Activated T-helper 2 cell treated with anti-CD3 and anti-CD28 coated beads, Interferon-gamma antibody, Interleukin-2, Interleukin-4, amounts not matched to agents 10 μg/mL and 5 μg/mL and 100 μg/mL, durations not matched to agents 14 hours and 24 hours and 36 hours (primary cell): ENCODE measurements at regions of chr12 and their contacts with region 1.

Region 1: GRCh38 chr12:43835656-43836474 is at the start of gene TMEM117:
- DNase-seq: peak; percentile 49
- H3K4me3 Mint-ChIP-seq: peak within 1 kb of the TSS; percentile 79
- H3K27ac Mint-ChIP-seq: peak within 1 kb of the TSS; percentile 34
- H3K4me1 Mint-ChIP-seq: peaks cover 24% of the 10 kb centered on the region
- H3K27me3 Mint-ChIP-seq: peaks cover 41% of the 10 kb centered on the region
- total RNA-seq, gene TMEM117: 1.0 and 1.3 TPM in 2 replicates

Region 2: GRCh38 chr12:43621262-43621661 is 214.6 kb before region 1 on chr12:
- intact Hi-C with region 1: no loop called
- DNase-seq: no peak
- H3K4me3 Mint-ChIP-seq: no peak overlapping the region
- H3K27ac Mint-ChIP-seq: no peak overlapping the region
- H3K4me1 Mint-ChIP-seq: no peaks in the 10 kb centered on the region
- H3K27me3 Mint-ChIP-seq: no peaks in the 10 kb centered on the region

Region 3: GRCh38 chr12:43758728-43759563 is 76.9 kb before region 1 on chr12 and contains the starts of genes IRAK4 and PUS7L:
- intact Hi-C with region 1: loop called (anchors 2 kb)
- DNase-seq: peak; percentile 91
- H3K4me3 Mint-ChIP-seq: peak within 1 kb of the TSS; percentile 96
- H3K27ac Mint-ChIP-seq: peak within 1 kb of the TSS; percentile 97
- H3K4me1 Mint-ChIP-seq: peaks cover 52% of the 10 kb centered on the region
- H3K27me3 Mint-ChIP-seq: no peaks in the 10 kb centered on the region
- total RNA-seq, gene IRAK4: 26.5 and 28.5 TPM in 2 replicates
- total RNA-seq, gene PUS7L: 22.8 and 24.4 TPM in 2 replicates

Region 4: DNA sequence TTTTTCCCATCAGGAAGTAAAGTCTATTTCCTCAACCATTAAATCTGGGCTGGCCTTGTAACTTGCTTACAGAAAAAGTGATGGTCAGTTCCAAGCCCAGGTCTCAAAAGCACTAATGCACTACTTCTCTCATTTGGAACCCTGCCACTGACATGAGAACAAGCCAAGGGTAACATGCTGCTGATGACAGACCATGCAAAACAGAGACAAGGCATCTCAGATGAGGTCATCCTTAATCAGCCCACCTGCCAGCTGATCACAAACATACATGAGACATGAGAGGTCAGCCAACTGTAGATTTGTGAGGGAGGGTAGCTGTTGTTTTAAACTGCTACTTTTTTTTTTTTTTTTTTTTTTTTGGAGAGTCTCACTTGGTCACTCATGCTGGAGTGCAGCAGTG is 45.9 kb before region 1 on chr12:
- intact Hi-C with region 1: no loop called
- DNase-seq: no peak
- H3K4me3 Mint-ChIP-seq: no peak overlapping the region
- H3K27ac Mint-ChIP-seq: no peak overlapping the region
- H3K4me1 Mint-ChIP-seq: no peaks in the 10 kb centered on the region
- H3K27me3 Mint-ChIP-seq: no peaks in the 10 kb centered on the region

Region 5: GRCh38 chr12:43805860-43806736 is 29.8 kb before region 1 on chr12 and contains the start of gene TWF1:
- intact Hi-C with region 1: loop called (anchors 1 kb)
- DNase-seq: peak; percentile 84
- H3K4me3 Mint-ChIP-seq: peak within 1 kb of the TSS; percentile 100
- H3K27ac Mint-ChIP-seq: peak within 1 kb of the TSS; percentile 100
- H3K4me1 Mint-ChIP-seq: peaks cover 25% of the 10 kb centered on the region
- H3K27me3 Mint-ChIP-seq: peaks cover 6% of the 10 kb centered on the region
- total RNA-seq, gene TWF1: 21.6 and 22.3 TPM in 2 replicates

Region 6: DNA sequence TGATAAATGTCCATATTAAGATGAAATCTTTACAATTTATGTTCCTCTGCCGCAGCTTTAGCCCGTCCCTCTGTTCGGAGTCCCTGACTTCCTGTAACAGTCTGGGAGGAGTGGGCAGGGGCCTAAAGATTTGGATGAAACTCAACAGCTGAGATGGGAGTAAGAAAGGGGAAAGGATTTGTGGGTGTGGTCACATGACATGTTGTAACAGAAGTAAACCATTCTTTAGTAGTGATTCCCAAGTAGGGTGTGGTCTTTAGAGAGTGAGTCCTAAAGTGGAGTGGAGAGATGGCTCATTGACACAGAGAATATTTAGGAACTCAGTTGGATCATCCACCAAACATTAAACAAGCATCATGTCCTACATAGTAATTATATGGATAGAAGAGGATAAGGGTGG is 12.9 kb after region 1 on chr12:
- intact Hi-C with region 1: loop called (anchors 1 kb)
- DNase-seq: no peak
- H3K4me3 Mint-ChIP-seq: no peak overlapping the region
- H3K27ac Mint-ChIP-seq: no peak overlapping the region
- H3K4me1 Mint-ChIP-seq: peaks cover 16% of the 10 kb centered on the region
- H3K27me3 Mint-ChIP-seq: peaks cover 2% of the 10 kb centered on the region

Region 7: DNA sequence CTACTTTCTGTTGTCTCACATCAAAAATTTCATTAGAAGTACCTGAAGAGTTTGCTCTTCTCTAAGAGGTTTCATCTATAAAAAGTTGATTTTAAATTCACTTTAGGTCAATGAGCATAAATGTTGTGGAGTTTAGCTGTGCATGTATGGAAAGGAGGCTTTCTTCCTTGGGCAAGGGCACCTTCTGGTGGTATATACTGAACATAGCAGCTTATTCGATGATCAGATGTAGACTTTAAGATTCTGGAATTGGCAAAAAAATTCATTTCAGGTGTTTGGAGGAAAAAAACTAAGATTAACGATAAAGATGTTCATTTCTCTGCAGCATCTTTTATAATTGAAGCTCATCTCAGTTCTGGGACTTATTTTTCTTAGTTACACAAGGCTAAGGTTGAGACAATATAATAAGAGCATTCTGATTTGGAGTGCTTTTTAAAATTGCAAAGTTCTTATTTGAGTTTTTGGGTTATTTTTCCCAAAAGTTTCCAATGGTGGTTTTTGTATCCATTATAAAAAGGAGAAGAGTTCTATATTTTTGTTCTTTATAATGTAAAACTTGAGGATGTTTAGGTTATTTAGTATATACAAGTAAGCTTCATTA is 46.8 kb after region 1 on chr12:
- intact Hi-C with region 1: no loop called
- DNase-seq: no peak
- H3K4me3 Mint-ChIP-seq: no peak overlapping the region
- H3K27ac Mint-ChIP-seq: no peak overlapping the region
- H3K4me1 Mint-ChIP-seq: no peaks in the 10 kb centered on the region
- H3K27me3 Mint-ChIP-seq: no peaks in the 10 kb centered on the region

Region 8: GRCh38 chr12:43930032-43930431 is 94.2 kb after region 1 on chr12:
- intact Hi-C with region 1: no loop called
- DNase-seq: no peak
- H3K4me3 Mint-ChIP-seq: no peak overlapping the region
- H3K27ac Mint-ChIP-seq: no peak overlapping the region
- H3K4me1 Mint-ChIP-seq: no peaks in the 10 kb centered on the region
- H3K27me3 Mint-ChIP-seq: no peaks in the 10 kb centered on the region